PC-3 (cell line): ENCODE measurements at regions of chr15 and their contacts with region 1.

Region 1: DNA sequence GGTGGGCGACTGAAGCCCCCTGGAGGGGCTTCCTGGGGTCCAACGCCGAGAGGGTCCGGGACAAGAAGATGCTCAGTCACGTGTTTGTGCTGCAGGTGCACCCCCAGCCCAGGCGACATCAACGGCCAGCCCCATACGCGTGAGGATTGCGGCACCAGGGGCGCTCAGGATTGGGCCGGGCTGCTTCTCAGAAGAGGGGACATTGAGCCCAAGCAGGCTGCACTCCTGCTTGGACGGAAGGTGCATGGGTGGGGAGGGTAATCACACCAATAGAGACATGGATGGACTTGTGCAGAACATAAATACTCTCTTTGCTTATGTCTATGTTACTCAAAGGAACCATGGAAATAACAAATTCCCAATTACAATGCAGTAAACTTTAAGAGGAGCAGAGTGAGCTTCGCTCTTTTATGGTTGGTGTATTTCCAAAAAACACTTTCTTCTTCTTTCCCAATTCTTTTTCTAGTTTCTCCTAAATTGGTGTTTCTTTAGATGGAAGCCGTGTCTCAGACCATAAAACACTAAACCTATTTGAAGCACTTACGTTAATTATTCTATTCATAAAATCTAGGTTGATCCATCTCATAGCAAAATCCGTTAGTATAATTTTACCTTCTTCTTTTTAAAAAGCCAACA is 182.7 kb downstream of the GOLGA6L6 start:
- DNase-seq: no peak
- ATAC-seq: no peak
- H3K4me3 ChIP-seq: no peak overlapping the region
- H3K27ac ChIP-seq: no peak overlapping the region
- H3K4me1 ChIP-seq: no peaks in the 10 kb centered on the region
- H3K27me3 ChIP-seq: no peaks in the 10 kb centered on the region
- CTCF ChIP-seq: no peak

Region 2: GRCh38 chr15:20106026-20106425 is 252.9 kb before region 1 on chr15:
- CTCF ChIA-PET with region 1: no interaction called
- POLR2A ChIA-PET with region 1: no interaction called
- intact Hi-C with region 1: no loop called
- DNase-seq: no peak
- ATAC-seq: no peak
- H3K4me3 ChIP-seq: no peak overlapping the region
- H3K27ac ChIP-seq: no peak overlapping the region
- H3K4me1 ChIP-seq: no peaks in the 10 kb centered on the region
- H3K27me3 ChIP-seq: no peaks in the 10 kb centered on the region
- CTCF ChIP-seq: no peak

Region 3: GRCh38 chr15:20280933-20281463 is 77.9 kb before region 1 on chr15:
- CTCF ChIA-PET with region 1: no interaction called
- POLR2A ChIA-PET with region 1: no interaction called
- intact Hi-C with region 1: no loop called
- DNase-seq: no peak
- ATAC-seq: no peak
- H3K4me3 ChIP-seq: no peak overlapping the region
- H3K27ac ChIP-seq: no peak overlapping the region
- H3K4me1 ChIP-seq: no peaks in the 10 kb centered on the region
- H3K27me3 ChIP-seq: no peaks in the 10 kb centered on the region
- CTCF ChIP-seq: no peak

Region 4: GRCh38 chr15:20340931-20341661 is 17.8 kb before region 1 on chr15:
- CTCF ChIA-PET with region 1: no interaction called
- POLR2A ChIA-PET with region 1: no interaction called
- intact Hi-C with region 1: no loop called
- DNase-seq: peak; percentile 14
- ATAC-seq: peak; percentile 21; the same call in 1 of the 2 replicates
- H3K4me3 ChIP-seq: no peak overlapping the region; the same call in 1 of the 2 replicates
- H3K27ac ChIP-seq: no peak overlapping the region
- H3K4me1 ChIP-seq: no peaks in the 10 kb centered on the region
- H3K27me3 ChIP-seq: no peaks in the 10 kb centered on the region
- CTCF ChIP-seq: no peak

Region 5: GRCh38 chr15:20386198-20386597 is 27.3 kb after region 1 on chr15:
- CTCF ChIA-PET with region 1: no interaction called
- POLR2A ChIA-PET with region 1: no interaction called
- intact Hi-C with region 1: loop called (anchors 2 kb)
- DNase-seq: no peak
- ATAC-seq: no peak
- H3K4me3 ChIP-seq: no peak overlapping the region
- H3K27ac ChIP-seq: no peak overlapping the region
- H3K4me1 ChIP-seq: no peaks in the 10 kb centered on the region
- H3K27me3 ChIP-seq: no peaks in the 10 kb centered on the region
- CTCF ChIP-seq: no peak

Region 6: GRCh38 chr15:20409247-20409646 is 50.4 kb after region 1 on chr15:
- CTCF ChIA-PET with region 1: no interaction called
- POLR2A ChIA-PET with region 1: no interaction called
- intact Hi-C with region 1: loop called (anchors 2 kb)
- DNase-seq: no peak
- ATAC-seq: no peak
- H3K4me3 ChIP-seq: no peak overlapping the region
- H3K27ac ChIP-seq: no peak overlapping the region
- H3K4me1 ChIP-seq: no peaks in the 10 kb centered on the region
- H3K27me3 ChIP-seq: no peaks in the 10 kb centered on the region
- CTCF ChIP-seq: no peak